ENCODE measurements at regions of chr1 and their contacts with region 1.

Region 1: DNA sequence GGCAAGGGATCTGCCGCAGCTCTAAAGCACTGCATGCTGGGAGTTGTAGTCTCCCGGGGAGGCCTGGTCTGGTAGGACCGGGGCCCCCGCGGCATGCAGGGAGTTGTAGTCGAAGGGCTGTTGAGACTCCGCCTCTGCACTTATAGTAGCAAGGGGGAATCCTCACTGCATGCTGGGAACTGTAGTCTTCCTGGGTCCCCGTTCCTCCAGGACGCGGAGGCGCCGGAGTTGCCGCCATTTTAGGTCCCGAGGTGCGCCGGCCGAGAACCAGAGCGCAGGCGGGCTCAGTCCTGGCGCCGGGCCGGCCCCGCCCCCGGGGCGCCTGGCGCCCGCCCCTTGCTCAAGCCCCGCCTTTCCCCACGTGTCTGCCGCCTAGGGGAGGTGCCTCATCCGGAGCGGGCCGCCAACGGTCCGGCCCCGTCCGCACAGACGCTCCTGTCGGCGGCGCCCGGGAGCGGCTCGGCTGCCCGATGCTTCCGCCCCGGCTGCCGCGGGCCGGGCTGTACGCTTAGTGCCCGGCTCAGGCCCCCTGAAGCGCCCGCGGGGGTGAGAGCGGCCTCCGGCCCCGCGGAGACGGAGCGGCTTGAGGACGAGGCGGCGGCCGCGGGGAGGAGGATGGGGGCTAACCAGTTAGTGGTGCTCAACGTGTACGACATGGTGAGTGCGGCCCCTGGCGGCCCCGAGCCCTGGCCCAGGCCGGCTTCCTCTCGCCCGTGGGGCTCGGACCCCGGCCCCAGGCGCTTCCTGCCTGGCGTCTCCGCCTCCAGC is at the start of gene DESI2:
- DNase-seq: peak; percentile 99
- ATAC-seq: peak; percentile 98
- total RNA-seq, gene DESI2: 21.2 TPM

Region 2: DNA sequence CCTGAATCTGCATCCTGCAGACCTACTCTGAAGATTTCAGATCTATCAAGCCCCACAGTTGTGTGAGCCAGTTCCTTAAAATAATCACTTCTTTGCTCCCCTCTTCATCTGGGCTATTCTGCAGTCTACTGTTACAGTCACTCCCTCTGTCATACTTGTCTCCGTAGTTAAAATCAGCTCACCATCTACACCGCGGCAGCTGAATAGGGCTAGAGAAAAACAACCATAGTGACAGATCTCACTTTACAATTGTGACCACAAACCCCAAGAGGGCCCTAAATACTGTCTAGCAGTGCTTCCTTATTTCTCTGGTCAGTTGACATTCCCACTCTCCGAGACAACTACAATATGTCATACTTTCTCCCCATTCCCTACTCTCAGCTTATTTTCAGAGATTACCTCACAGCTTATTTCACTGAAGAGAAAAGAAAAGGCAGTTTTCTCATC is 12.9 kb after region 1 on chr1:
- intact Hi-C with region 1: loop called (anchors 2 kb)
- DNase-seq: no peak
- ATAC-seq: peak; percentile 57

Region 3: GRCh38 chr1:244796718-244797406 is 144.0 kb after region 1 on chr1:
- intact Hi-C with region 1: loop called (anchors 5 kb)
- DNase-seq: no peak
- ATAC-seq: no peak

Measured in Right ventricle myocardium inferior (tissue), 1 donor.